Endothelial cell of umbilical vein (primary cell): ENCODE measurements at regions of chr3 and their contacts with region 1.

Region 1: GRCh38 chr3:197487908-197488391 is 67.8 kb downstream of the BDH1 start:
- DNase-seq: peak; percentile 98
- H3K4me3 ChIP-seq: no peak overlapping the region
- H3K27ac ChIP-seq: peak overlapping the region; percentile 87
- H3K4me1 ChIP-seq: peaks cover 46% of the 10 kb centered on the region
- H3K27me3 ChIP-seq: no peaks in the 10 kb centered on the region
- CTCF ChIP-seq: no peak
- POLR2A ChIP-seq: no peak

Region 2: GRCh38 chr3:197394464-197395321 is 93.3 kb before region 1 on chr3:
- CTCF ChIA-PET with region 1: interaction called, 4 read pairs
- POLR2A ChIA-PET with region 1: no interaction called
- dilution Hi-C with region 1: no loop called
- intact Hi-C with region 1: loop called (anchors 2 kb)
- DNase-seq: peak; percentile 94
- H3K4me3 ChIP-seq: no peak overlapping the region
- H3K27ac ChIP-seq: peak overlapping the region; percentile 90
- H3K4me1 ChIP-seq: peaks cover 33% of the 10 kb centered on the region
- H3K27me3 ChIP-seq: peaks cover 4 to 5% of the 10 kb centered on the region in 2 experiments
- CTCF ChIP-seq: no peak
- POLR2A ChIP-seq: no peak

Region 3: DNA sequence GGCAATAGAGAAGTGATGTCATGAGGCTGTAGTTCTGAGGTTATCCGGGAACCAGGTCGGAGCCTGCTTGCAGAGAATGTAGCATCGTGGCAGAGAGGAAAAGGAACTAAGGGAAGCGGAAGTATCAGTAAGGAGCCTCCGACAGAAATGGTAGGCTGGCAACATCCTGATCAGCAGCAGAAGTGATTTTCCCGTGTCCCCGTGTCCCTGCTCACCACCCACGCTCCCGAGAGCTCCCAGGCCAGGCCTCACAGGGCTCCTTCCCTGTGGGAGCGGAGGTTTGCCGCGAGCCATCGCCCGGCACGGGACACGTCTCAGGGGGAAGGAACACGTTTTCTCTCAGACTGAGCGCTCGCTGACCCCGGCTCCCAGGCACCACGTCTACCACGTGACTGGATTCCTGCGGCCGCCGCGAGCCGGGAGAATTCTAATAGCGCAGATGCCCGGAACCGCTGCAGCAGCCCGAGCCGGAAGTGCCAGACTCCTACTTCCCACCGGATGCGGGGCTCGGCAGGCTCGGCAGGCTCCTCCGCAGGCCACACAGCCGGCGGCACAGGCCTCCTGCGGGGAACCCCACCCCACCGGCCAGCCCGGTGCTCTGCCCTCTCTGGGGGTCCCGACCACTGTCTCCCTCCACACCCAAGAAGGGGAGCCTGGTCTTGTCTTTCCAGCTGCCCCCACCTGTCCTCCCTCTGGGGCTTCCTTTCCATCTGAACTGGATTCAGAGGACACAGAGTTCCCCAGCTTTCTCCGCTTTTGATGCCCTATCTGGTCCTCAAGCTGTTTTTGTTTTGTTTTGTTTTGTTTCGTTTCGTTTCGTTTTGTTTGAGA is 31.5 kb before region 1 on chr3:
- CTCF ChIA-PET with region 1: no interaction called
- POLR2A ChIA-PET with region 1: no interaction called
- dilution Hi-C with region 1: no loop called
- intact Hi-C with region 1: loop called (anchors 1 kb)
- DNase-seq: peak; percentile 77
- H3K4me3 ChIP-seq: peak overlapping the region in 2 of 3 experiments; percentile 12 to 35
- H3K27ac ChIP-seq: peak overlapping the region; percentile 47
- H3K4me1 ChIP-seq: peaks cover 11% of the 10 kb centered on the region
- H3K27me3 ChIP-seq: no peaks in the 10 kb centered on the region
- CTCF ChIP-seq: no peak
- POLR2A ChIP-seq: peak; percentile 89

Region 4: GRCh38 chr3:197466586-197467399 is 21.2 kb before region 1 on chr3:
- CTCF ChIA-PET with region 1: interaction called, 7 read pairs
- POLR2A ChIA-PET with region 1: no interaction called
- dilution Hi-C with region 1: no loop called
- intact Hi-C with region 1: loop called (anchors 2 kb)
- DNase-seq: peak; percentile 69
- H3K4me3 ChIP-seq: no peak overlapping the region
- H3K27ac ChIP-seq: peak overlapping the region; percentile 36
- H3K4me1 ChIP-seq: peaks cover 33% of the 10 kb centered on the region
- H3K27me3 ChIP-seq: no peaks in the 10 kb centered on the region
- CTCF ChIP-seq: no peak
- POLR2A ChIP-seq: no peak

Region 5: DNA sequence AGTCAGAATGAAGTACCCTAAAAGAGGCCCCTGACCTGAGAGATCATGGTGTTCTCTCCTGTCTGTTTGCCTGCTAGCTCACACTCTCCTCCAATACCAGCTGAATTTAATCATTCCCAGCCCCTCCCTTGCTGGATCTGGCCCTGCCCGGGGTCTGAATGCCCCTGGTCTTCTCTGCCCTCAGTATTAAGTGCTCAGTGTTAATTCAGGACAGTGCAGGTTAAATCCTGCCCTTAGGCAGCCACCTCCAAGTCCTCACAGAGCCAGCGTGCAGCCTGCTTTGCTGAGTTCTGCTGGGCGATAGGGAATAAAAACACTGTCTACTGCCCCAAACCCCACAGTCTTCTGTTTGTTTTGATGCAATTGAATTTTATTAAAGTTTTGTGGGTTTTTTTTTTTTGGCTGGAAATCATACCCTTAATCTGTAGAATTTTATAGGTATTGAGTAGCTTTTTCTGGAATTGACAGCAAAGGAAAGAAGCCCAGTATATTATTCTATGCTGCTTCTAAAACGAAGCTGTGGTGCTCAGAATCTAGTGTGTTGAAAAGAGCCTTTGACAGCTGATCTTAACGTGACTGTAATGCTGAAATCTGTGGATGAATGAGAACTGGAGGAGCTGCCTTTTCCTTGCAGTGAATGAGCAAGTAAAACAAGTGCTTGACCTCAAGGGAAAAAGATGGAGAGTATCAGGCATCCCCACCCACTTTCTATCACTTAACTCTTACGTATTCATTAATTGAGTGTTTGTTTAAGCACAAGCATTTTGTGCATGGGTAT is 80.1 kb after region 1 on chr3:
- CTCF ChIA-PET with region 1: no interaction called
- POLR2A ChIA-PET with region 1: no interaction called
- dilution Hi-C with region 1: no loop called
- intact Hi-C with region 1: no loop called
- DNase-seq: no peak
- H3K4me3 ChIP-seq: no peak overlapping the region
- H3K27ac ChIP-seq: no peak overlapping the region
- H3K4me1 ChIP-seq: no peaks in the 10 kb centered on the region
- H3K27me3 ChIP-seq: peaks cover 5 to 13% of the 10 kb centered on the region in 2 experiments
- CTCF ChIP-seq: no peak
- POLR2A ChIP-seq: no peak